HAP-1 (cell line): ENCODE measurements at regions of chr11 and their contacts with region 1.

Region 1: GRCh38 chr11:126989942-126990715 is 10.4 kb downstream of the KIRREL3 start:
- DNase-seq: peak; percentile 52 to 81
- H3K4me3 ChIP-seq: no peak overlapping the region
- H3K4me1 ChIP-seq: no peaks in the 10 kb centered on the region
- H3K27me3 ChIP-seq: peaks cover 10% of the 10 kb centered on the region

Region 2: DNA sequence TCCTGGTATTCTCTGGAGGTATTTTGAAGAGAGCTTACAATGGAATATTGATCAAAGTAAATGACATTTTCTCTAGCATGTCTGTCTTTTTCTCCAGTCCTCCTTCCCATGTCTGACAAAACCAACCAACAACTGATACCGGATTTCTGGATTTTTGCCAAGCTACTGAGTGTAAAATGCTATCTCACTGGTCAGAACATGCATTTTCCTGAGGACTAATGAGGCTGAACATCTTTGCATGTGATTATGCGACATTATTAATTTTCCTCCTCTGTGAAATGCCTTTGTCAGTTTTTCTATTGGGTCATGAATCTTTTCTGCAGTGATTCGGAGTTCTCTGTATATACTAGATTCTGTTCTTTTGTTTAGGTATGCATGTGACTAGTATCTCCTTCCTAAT is 978.9 kb before region 1 on chr11:
- in situ Hi-C with region 1: no loop called
- DNase-seq: peak in 1 of 2 experiments; percentile 14
- H3K4me3 ChIP-seq: no peak overlapping the region
- H3K4me1 ChIP-seq: peaks cover 20% of the 10 kb centered on the region
- H3K27me3 ChIP-seq: no peaks in the 10 kb centered on the region

Region 3: GRCh38 chr11:126303623-126304456 is 686.3 kb before region 1 on chr11 and contains the start of gene DCPS:
- in situ Hi-C with region 1: loop called (anchors 25 kb)
- DNase-seq: peak; percentile 87 to 91
- H3K4me3 ChIP-seq: peak within 1 kb of the TSS; percentile 71
- H3K4me1 ChIP-seq: peaks cover 18% of the 10 kb centered on the region
- H3K27me3 ChIP-seq: no peaks in the 10 kb centered on the region

Region 4: GRCh38 chr11:126440792-126441514 is 549.2 kb before region 1 on chr11:
- in situ Hi-C with region 1: loop called (anchors 25 kb)
- DNase-seq: peak; percentile 71 to 90
- H3K4me3 ChIP-seq: no peak overlapping the region
- H3K4me1 ChIP-seq: peaks cover 11% of the 10 kb centered on the region
- H3K27me3 ChIP-seq: no peaks in the 10 kb centered on the region

Region 5: GRCh38 chr11:126607374-126607773 is 382.8 kb before region 1 on chr11:
- in situ Hi-C with region 1: loop called (anchors 10 kb)
- DNase-seq: peak; percentile 31 to 63
- H3K4me3 ChIP-seq: no peak overlapping the region
- H3K4me1 ChIP-seq: no peaks in the 10 kb centered on the region
- H3K27me3 ChIP-seq: peaks cover 24% of the 10 kb centered on the region

Region 6: DNA sequence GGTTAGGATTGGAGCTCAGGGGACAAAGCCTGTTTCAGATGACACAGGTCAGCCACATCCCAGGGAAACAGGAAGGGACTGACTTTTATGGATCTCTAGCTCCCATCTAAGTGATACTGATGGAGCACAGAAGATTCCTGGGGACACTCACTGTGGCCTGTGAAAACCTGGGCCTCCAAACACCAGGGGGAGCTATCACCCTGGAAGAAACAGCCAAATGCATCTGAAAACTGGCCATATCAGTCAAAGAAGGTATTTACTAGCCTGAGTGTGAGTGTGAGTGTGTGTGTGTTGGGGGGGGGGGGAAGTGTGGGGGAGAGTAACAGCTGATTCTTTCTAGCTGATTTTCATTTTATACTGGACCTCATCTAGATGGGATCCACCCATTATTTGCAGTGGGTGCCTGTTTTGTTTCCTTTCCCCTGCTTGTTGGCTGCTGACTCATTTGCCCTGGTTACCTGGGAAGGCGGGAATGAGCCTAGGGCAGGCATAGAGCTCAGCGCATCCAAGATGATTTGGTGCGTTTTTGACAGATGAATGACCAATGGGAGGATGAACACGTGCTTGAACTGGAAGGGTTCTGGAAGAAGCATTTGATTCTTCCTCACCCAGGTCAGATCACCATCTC is 273.6 kb before region 1 on chr11:
- in situ Hi-C with region 1: loop called (anchors 10 kb)
- DNase-seq: peak; percentile 21 to 71
- H3K4me3 ChIP-seq: no peak overlapping the region
- H3K4me1 ChIP-seq: no peaks in the 10 kb centered on the region
- H3K27me3 ChIP-seq: peaks cover 8% of the 10 kb centered on the region; the same call in 1 of the 2 replicates

Region 7: DNA sequence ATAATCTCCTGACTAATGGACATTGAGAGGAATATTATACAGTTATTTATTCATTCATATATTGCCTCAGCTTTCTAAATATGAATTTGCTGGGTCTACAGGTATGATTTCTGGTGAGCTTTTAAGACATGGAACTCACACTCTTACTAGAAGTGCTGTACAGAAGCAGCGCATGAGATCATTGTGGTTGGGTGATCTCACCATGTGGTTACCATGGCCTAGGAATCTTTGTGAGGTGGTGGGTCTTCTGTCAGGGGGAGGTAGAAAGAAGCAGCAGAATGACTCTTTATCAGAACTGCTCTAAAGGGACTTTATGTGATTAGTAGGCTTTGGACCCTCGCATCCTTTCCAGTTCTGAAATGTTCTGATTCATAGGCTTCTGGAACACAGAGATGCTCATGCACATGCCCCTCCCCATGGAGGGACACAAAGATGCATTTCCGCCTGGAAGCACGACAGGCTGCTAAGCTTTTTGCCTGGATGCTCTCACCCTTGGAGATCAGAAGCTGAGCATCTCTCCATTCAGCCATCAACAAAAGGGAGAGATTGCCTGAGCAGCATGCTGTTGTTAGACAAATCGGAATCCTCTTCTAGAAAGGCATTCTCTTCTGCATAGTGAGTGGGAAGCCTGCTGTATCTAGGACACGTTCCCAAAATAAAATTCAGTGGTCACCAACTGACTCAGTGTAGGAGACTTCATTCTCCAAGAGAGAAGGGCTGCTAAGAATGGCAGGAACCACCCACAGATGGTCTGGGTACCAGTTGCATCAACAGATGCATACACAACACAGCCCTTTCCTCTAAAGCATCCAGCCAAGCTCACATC is 40.9 kb before region 1 on chr11:
- in situ Hi-C with region 1: no loop called
- DNase-seq: no peak
- H3K4me3 ChIP-seq: no peak overlapping the region
- H3K4me1 ChIP-seq: no peaks in the 10 kb centered on the region
- H3K27me3 ChIP-seq: no peaks in the 10 kb centered on the region

Region 8: GRCh38 chr11:127110542-127110941 is 120.4 kb after region 1 on chr11:
- in situ Hi-C with region 1: no loop called
- DNase-seq: no peak
- H3K4me3 ChIP-seq: no peak overlapping the region
- H3K4me1 ChIP-seq: no peaks in the 10 kb centered on the region
- H3K27me3 ChIP-seq: no peaks in the 10 kb centered on the region